ENCODE measurements at regions of chr5 and their contacts with region 1.

Region 1: GRCh38 chr5:132905867-132906295 is 32.4 kb downstream of the LEAP2 start:
- DNase-seq: peak; percentile 15
- H3K4me3 ChIP-seq: no peak overlapping the region
- H3K27ac ChIP-seq: no peak overlapping the region
- H3K4me1 ChIP-seq: peaks cover 31% of the 10 kb centered on the region
- CTCF ChIP-seq: peak; percentile 31; the same call in 1 of the 2 replicates

Region 2: DNA sequence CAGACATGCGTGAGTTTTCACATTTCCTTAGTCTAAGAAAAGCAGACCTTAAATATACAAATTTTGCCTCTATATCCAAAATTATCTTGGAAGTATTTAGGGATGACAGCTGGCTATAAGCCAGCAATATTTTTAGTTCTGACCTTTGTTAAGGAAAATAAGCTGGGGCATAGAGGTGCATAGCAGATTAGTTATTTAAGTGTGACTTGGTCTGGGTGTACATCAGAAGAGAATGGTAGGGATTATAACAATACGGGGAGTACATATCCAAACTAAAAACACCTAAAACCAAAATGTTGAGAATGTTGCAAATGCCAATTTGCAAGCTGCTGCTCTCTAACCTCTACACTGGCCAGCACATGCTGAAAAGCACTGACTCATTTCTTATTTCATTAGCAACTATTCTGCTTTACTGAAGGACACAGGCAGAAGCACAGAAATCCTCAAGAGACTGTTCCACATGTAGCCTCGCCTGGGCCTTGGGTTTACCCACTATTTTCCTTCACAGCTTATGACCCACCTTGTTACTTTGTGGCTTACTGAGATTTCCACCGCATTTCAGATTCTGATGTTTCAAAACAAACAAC is 10.1 kb before region 1 on chr5:
- CTCF ChIA-PET with region 1: no interaction called
- POLR2A ChIA-PET with region 1: interaction called, 11 read pairs
- intact Hi-C with region 1: no loop called
- DNase-seq: no peak
- H3K4me3 ChIP-seq: no peak overlapping the region
- H3K27ac ChIP-seq: no peak overlapping the region
- H3K4me1 ChIP-seq: peaks cover 10% of the 10 kb centered on the region
- CTCF ChIP-seq: no peak

Region 3: GRCh38 chr5:133533541-133533940 is 627.7 kb after region 1 on chr5:
- CTCF ChIA-PET with region 1: no interaction called
- POLR2A ChIA-PET with region 1: no interaction called
- intact Hi-C with region 1: no loop called
- DNase-seq: no peak
- H3K4me3 ChIP-seq: no peak overlapping the region
- H3K27ac ChIP-seq: no peak overlapping the region
- H3K4me1 ChIP-seq: no peaks in the 10 kb centered on the region
- CTCF ChIP-seq: no peak